ENCODE measurements at regions of chr11 and their contacts with region 1.

Region 1: GRCh38 chr11:4704054-4704789 is at the start of gene MMP26:
- DNase-seq: no peak
- H3K4me3 ChIP-seq: no peak within 1 kb of the TSS
- H3K4me3 Mint-ChIP-seq: no peak within 1 kb of the TSS
- H3K27ac Mint-ChIP-seq: no peak within 1 kb of the TSS
- H3K4me1 ChIP-seq: no peaks in the 10 kb centered on the region
- H3K4me1 Mint-ChIP-seq: no peaks in the 10 kb centered on the region
- H3K27me3 ChIP-seq: no peaks in the 10 kb centered on the region
- H3K27me3 Mint-ChIP-seq: peaks cover 5% of the 10 kb centered on the region
- CTCF ChIP-seq: no peak
- total RNA-seq, gene MMP26: not detected in 2 replicates

Region 2: GRCh38 chr11:4748438-4748837 is 44.2 kb after region 1 on chr11:
- CTCF ChIA-PET with region 1: no interaction called
- POLR2A ChIA-PET with region 1: no interaction called
- intact Hi-C with region 1: no loop called
- DNase-seq: no peak
- H3K4me3 ChIP-seq: no peak overlapping the region
- H3K4me3 Mint-ChIP-seq: no peak overlapping the region
- H3K27ac Mint-ChIP-seq: no peak overlapping the region
- H3K4me1 ChIP-seq: no peaks in the 10 kb centered on the region
- H3K4me1 Mint-ChIP-seq: no peaks in the 10 kb centered on the region
- H3K27me3 ChIP-seq: no peaks in the 10 kb centered on the region
- H3K27me3 Mint-ChIP-seq: peaks cover 11% of the 10 kb centered on the region
- CTCF ChIP-seq: no peak

Region 3: DNA sequence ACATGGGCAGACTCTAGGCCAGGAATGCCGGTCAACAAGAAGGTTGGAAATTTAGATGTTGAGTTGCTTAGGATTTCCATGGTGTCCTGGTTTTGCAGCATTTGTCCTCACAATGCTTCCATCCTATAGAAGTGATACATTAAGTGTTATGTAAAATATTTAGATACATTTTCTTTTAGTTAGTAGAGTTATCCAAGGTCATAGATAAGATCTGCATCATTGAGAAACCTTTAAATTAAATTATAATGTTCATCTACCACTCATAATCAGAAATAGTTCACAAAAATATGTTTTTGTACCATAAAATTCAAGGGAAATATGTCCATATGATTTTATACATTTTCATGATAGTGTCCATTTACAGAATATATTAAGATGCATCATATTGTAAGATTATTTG is 65.6 kb after region 1 on chr11 and contains the start of gene OR51F1:
- CTCF ChIA-PET with region 1: no interaction called
- POLR2A ChIA-PET with region 1: no interaction called
- intact Hi-C with region 1: loop called (anchors 2 kb)
- DNase-seq: no peak
- H3K4me3 ChIP-seq: no peak within 1 kb of the TSS
- H3K4me3 Mint-ChIP-seq: no peak within 1 kb of the TSS
- H3K27ac Mint-ChIP-seq: no peak within 1 kb of the TSS
- H3K4me1 ChIP-seq: no peaks in the 10 kb centered on the region
- H3K4me1 Mint-ChIP-seq: no peaks in the 10 kb centered on the region
- H3K27me3 ChIP-seq: no peaks in the 10 kb centered on the region; the same call in 1 of the 2 replicates
- H3K27me3 Mint-ChIP-seq: peaks cover 13% of the 10 kb centered on the region
- CTCF ChIP-seq: no peak
- total RNA-seq, gene OR51F1: not detected in 2 replicates

Region 4: DNA sequence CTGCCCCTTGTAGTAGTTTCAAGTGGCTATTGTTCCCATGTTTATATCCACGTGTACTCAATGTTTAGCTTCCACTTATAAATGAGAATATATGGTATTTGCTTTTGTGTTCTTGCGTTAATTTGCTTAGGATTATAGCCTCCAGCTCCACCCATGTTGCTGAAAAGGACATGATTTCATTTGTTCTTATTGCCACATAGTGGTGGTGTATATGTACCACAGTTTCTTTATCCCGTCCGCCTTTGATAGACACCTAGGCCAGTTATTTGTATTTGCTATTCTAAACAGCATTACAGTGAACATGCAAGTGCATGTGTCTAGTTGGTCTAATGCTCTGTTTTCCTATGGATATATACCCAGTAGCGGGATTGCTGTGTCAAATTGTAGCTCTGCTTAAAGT is 613.1 kb after region 1 on chr11:
- CTCF ChIA-PET with region 1: no interaction called
- POLR2A ChIA-PET with region 1: no interaction called
- intact Hi-C with region 1: no loop called
- DNase-seq: no peak
- H3K4me3 ChIP-seq: no peak overlapping the region
- H3K4me3 Mint-ChIP-seq: no peak overlapping the region
- H3K27ac Mint-ChIP-seq: no peak overlapping the region
- H3K4me1 ChIP-seq: no peaks in the 10 kb centered on the region
- H3K4me1 Mint-ChIP-seq: no peaks in the 10 kb centered on the region
- H3K27me3 ChIP-seq: no peaks in the 10 kb centered on the region
- H3K27me3 Mint-ChIP-seq: peaks cover 13% of the 10 kb centered on the region
- CTCF ChIP-seq: no peak

Measured in Caco-2 (cell line).